Activated B cell treated with CpG ODN at 0.5 μM for 24 hours (primary cell): ENCODE measurements at regions of chr1 and their contacts with region 1.

Region 1: GRCh38 chr1:77779529-77780281 is at the start of gene MIGA1:
- DNase-seq: peak; percentile 69
- ATAC-seq: peak; percentile 96
- H3K4me3 Mint-ChIP-seq: peak within 1 kb of the TSS; percentile 92
- H3K27ac Mint-ChIP-seq: peak within 1 kb of the TSS; percentile 82
- H3K4me1 Mint-ChIP-seq: peaks cover 28% of the 10 kb centered on the region
- H3K27me3 Mint-ChIP-seq: no peaks in the 10 kb centered on the region
- CTCF ChIP-seq: no peak
- total RNA-seq, gene MIGA1: 11.1 and 13.0 TPM in 2 replicates

Region 2: DNA sequence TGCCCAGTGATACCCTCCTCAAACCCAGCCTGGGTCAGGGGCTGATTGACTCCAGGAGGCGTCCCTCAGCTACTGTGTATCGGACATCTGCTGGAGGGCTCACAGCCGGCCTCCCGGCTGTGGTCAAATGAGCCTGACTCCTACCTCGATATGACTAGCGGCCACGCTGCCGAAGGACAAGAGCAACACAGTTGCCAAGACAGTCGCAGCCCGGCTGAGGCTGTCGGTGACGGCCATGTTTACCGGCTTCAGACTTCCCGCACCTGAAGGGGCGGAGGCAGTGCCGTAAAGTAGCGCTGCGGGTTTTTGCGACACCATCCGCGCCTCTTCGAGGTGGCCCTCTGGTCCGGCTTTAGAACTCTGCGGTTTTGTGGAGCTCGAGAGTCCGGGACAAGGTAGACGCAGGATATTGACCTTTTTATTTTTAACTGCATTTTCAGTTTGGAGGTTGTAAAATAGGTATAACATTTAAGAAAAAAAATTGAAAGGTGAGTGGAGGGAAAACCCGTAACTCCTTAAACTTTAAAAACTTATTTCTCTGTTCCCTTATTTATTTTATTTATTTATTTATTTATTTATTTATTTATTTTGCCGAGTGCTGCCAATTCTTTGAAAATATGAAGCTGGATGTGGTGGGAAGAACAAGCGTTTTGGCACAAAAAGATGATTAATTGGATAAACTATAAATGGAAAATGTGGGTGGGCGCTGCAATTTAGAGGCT is 560.4 kb before region 1 on chr1 and contains the start of gene PIGK:
- CTCF ChIA-PET with region 1: no interaction called
- POLR2A ChIA-PET with region 1: interaction called, 7 read pairs
- intact Hi-C with region 1: loop called (anchors 1 kb)
- DNase-seq: peak; percentile 77
- ATAC-seq: peak; percentile 98
- H3K4me3 Mint-ChIP-seq: peak within 1 kb of the TSS; percentile 95
- H3K27ac Mint-ChIP-seq: peak within 1 kb of the TSS; percentile 89
- H3K4me1 Mint-ChIP-seq: peaks cover 26% of the 10 kb centered on the region
- H3K27me3 Mint-ChIP-seq: no peaks in the 10 kb centered on the region
- CTCF ChIP-seq: no peak
- total RNA-seq, gene PIGK: 10.8 and 11.1 TPM in 2 replicates

Region 3: DNA sequence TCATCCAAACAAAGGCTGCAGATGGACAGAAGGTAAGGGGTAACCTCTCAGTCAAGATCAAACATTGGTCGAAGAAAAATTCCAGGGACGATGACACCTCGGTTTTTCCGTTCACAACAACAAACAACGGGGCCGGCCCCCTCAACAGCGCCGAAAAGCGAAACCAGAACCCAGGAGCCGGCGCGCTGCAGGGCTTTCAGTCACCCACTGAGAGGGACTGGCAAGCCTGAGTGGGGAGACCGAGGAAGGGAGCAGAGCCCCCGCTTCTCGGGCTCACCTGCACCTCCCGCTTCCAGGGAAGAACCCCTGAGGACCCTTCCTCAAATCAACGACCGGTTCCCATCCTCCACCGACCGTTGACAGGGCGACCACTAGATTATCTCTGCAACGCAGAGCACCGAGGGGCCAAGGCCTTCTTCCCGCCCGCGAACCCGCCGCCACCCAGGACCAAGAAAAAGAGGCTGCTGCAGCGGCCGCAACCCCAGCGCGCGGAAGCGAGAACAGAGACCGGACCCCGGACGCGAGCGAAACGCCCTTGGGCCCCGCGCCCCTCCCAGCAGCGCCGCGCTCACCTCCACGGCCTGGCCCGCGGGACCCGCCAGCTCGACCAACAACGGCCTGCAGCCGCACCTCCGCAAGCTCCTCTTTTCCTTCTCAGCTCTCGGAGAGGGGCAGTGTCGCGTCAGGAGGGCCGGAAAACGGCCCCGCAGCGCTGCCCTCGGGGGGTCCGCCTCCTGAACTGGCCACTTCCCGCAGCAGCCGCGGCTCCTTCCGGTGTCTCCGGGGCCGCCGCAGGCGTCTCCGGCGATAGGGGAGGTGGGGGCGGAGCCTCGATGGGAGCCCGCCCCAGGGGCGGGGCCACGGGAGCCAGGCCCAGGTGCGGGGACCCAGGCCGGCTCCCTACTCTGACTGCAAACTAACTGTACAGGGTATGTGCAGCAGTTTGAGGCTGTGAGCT is 20.4 kb before region 1 on chr1 and contains the start of gene USP33:
- CTCF ChIA-PET with region 1: no interaction called
- POLR2A ChIA-PET with region 1: interaction called, 11 read pairs
- intact Hi-C with region 1: loop called (anchors 1 kb)
- DNase-seq: peak; percentile 95
- ATAC-seq: peak; percentile 97
- H3K4me3 Mint-ChIP-seq: peak within 1 kb of the TSS; percentile 93
- H3K27ac Mint-ChIP-seq: peak within 1 kb of the TSS; percentile 87
- H3K4me1 Mint-ChIP-seq: peaks cover 32% of the 10 kb centered on the region
- H3K27me3 Mint-ChIP-seq: peaks cover 2% of the 10 kb centered on the region
- CTCF ChIP-seq: no peak
- total RNA-seq, gene USP33: 42.1 and 58.4 TPM in 2 replicates

Region 4: DNA sequence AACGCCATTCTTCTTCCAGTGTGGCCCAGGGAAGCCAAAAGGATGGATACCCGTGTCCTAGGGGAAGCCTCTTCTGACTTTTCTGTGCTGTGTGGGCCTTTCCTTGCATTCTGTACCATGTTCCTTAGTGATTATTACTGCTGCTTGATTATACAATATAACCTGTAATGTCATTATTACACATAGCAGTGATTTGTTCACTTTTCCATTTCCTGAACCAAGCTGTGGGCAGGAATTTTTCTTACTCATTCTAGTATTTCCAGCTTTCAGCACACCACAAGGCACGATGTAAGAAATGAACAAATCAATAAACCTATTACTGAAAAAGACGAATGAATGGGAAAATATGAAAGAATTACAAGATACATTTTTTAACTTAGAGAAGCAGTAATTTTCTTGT is 11.7 kb before region 1 on chr1:
- CTCF ChIA-PET with region 1: no interaction called
- POLR2A ChIA-PET with region 1: interaction called, 16 read pairs
- intact Hi-C with region 1: loop called (anchors 1 kb)
- DNase-seq: no peak
- ATAC-seq: no peak
- H3K4me3 Mint-ChIP-seq: no peak overlapping the region
- H3K27ac Mint-ChIP-seq: no peak overlapping the region
- H3K4me1 Mint-ChIP-seq: peaks cover 13% of the 10 kb centered on the region
- H3K27me3 Mint-ChIP-seq: peaks cover 12% of the 10 kb centered on the region
- CTCF ChIP-seq: no peak